ENCODE measurements at regions of chr20 and their contacts with region 1.

Region 1: DNA sequence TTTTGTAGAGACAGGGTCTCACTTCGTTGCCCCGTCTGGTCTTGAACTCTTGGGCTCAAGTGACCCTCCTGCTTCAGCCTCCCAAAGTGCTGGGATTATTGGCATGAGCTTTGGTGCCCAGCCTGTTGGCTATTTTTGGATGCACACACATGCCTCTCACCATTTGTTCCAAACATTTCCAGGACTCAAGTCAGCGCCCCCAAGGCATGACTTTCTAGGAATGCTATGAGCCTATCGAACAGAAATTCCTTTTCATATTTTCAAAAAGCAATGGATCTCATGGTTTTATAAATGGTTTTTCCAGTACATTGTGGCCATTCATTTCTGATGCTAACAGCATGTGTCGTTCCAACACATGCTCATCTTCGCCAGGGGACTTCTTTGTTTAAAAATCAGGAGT is 119.3 kb upstream of the NAA20 start:
- DNase-seq: no peak
- H3K4me3 ChIP-seq: no peak overlapping the region
- H3K27ac ChIP-seq: no peak overlapping the region
- H3K4me1 ChIP-seq: no peaks in the 10 kb centered on the region
- H3K27me3 ChIP-seq: no peaks in the 10 kb centered on the region
- CTCF ChIP-seq: no peak

Region 2: DNA sequence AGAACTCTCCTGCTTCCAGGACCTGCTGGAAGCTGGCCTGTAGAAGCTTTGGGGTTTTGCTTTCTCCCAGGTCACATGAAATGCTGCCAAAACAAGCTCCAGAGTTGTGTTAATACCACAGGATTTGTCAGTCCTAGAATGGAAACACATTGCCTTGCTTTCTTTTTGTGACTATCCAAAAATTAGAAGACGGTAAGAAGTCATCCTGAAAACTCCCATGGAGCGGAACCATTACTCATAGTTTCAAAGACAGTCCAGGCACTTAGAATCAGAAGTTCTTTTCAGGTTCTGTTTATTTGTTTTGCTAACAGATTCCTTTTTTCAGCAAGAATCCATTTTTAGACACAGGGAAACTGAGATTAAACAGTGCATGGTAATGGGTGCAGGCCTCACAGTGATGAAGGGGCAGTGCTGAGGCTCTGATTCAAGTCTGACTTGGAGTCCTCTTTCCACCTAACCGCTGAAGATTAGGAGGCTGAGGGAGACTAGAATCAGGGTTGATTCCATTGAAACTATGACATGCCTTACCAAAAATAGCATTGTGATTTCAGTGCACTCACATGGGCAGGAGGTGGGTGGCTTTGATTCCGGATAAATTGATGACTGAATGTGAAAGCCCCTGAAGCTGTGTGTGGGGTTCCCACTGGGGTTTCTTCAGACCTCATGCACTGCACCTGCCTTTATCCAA is 47.0 kb after region 1 on chr20:
- CTCF ChIA-PET with region 1: no interaction called
- dilution Hi-C with region 1: no loop called
- in situ Hi-C with region 1: loop called in 1 of 2 experiments (anchors 5 kb)
- intact Hi-C with region 1: no loop called
- DNase-seq: peak; percentile 50
- H3K4me3 ChIP-seq: no peak overlapping the region
- H3K27ac ChIP-seq: no peak overlapping the region
- H3K4me1 ChIP-seq: peaks cover 19% of the 10 kb centered on the region
- H3K27me3 ChIP-seq: no peaks in the 10 kb centered on the region
- CTCF ChIP-seq: no peak